ENCODE measurements at regions of chr4 and their contacts with region 1.

Region 1: DNA sequence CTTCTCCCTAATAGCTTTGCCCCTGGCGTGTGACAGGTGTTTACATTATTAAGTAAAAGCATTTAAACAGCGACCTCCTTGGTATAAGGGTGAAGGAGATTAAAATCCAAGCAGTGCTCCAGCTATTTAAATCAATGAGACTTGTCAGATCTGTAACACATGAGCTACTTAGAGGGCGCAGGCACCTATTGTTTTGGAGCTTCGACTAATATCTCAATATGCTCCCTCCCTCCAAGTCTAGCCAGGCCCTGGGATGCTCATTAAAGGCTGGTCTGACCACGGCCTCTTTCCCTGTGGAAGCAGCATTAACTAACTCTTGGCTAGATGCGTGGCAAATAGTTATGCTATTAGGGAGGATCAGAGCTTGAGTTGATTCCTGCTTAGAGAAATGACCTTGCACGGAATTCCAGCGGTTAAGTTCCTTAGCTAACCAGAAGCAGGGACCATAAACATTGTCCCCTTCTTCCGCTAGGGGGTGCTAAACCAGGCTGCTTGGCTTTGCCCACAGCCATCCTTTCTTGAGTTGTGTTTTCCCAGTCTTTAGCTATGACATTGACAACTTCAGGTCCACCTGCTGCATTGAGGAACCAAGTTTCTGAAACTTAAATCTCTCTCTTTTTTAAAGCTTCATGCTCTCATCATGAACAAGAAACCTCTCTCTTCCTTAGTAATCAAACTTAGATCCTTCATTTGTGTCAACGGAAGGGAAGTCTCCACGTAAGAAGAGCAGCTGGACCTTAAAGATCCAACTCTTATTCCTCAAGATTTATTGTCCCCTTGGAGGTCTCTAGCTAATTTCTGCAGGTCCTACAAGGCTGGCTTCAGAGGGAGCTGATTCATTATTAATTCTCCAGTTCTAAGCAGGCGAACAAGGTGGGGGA is 80.7 kb upstream of the IGFBP7 start:
- DNase-seq: peak; percentile 57 to 88
- H3K4me3 ChIP-seq: peak overlapping the region in 1 of 4 experiments; percentile 10; a peak in 1 of 8 replicates
- H3K27ac ChIP-seq: no peak overlapping the region
- H3K4me1 ChIP-seq: peaks cover 12 to 42% (median 22%) of the 10 kb centered on the region in 4 experiments
- H3K27me3 ChIP-seq: peaks cover 2 to 20% (median 11%) of the 10 kb centered on the region in 4 experiments; a peak in 6 of 7 replicates
- CTCF ChIP-seq: peak; percentile 66 to 96 (median 79)
- EP300 ChIP-seq: no peak
- POLR2A ChIP-seq: no peak
- RAD21 ChIP-seq: peak; percentile 58 to 68

Region 2: DNA sequence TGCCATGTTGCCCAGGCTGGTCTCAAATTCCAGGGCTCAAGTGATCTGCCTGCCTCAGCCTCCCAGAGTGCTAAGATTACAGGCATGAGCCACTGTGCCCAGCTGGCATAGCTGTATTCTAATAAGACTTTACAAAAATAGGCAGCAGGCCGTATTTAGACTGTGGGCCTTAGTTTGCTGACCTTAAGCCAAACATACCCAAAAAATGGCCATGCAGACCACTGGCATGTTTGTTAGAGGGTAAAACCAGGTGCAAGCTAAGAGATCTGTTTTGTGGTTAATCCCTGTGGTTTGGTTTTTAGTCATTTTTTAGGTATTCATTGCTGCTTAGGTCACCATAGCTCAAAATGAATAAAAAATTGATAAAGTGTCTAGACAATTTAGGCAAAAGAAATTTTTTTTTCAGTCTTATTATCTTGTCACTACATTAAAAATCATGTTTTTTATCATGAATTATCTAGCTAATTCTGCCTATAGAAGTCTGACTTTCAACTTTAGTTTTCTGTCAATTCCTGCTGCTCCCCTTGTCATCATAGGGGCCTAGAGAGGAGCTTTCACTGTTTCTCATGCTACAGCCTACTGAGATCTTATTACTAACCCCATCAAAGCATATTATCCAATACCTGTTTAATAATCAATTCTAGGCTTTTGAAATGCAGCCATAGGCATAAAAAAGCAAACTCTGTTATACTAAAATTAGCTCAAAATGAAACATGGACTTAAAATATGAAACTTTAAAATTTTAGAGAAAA is 361.9 kb before region 1 on chr4:
- CTCF ChIA-PET with region 1: no interaction called
- POLR2A ChIA-PET with region 1: no interaction called
- DNase-seq: no peak
- H3K4me3 ChIP-seq: no peak overlapping the region
- H3K27ac ChIP-seq: no peak overlapping the region
- H3K4me1 ChIP-seq: no peaks in the 10 kb centered on the region
- H3K27me3 ChIP-seq: no peaks in the 10 kb centered on the region
- CTCF ChIP-seq: no peak
- EP300 ChIP-seq: no peak
- POLR2A ChIP-seq: no peak
- RAD21 ChIP-seq: no peak

Region 3: DNA sequence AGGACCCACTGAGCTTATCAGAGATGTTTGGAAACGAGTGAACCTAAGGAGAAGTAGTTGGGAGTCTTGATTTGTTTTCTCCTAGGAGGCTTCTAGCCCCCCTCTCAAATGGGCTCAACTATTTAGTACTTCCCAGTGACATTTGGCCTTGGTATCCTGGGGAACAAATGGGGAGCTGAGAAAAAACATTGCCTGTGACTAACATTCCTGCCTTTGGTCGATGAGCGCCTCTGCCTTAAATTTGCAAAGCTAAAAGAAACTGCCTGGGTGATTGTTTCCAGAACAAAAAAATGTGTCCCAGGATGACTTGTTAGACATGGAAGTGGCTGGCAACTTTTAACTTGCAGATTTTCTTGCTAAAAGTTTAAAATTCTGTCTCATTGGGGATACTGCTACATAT is 21.9 kb before region 1 on chr4:
- CTCF ChIA-PET with region 1: interaction called, 91 read pairs
- POLR2A ChIA-PET with region 1: interaction called, 3 read pairs
- DNase-seq: no peak
- H3K4me3 ChIP-seq: no peak overlapping the region
- H3K27ac ChIP-seq: no peak overlapping the region
- H3K4me1 ChIP-seq: peaks cover 0 to 3% (median 1%) of the 10 kb centered on the region in 4 experiments; a peak in 3 of 7 replicates
- H3K27me3 ChIP-seq: peaks cover 0 to 10% (median 9%) of the 10 kb centered on the region in 4 experiments; a peak in 4 of 7 replicates
- CTCF ChIP-seq: no peak
- EP300 ChIP-seq: no peak
- POLR2A ChIP-seq: no peak
- RAD21 ChIP-seq: no peak

Region 4: GRCh38 chr4:57206172-57206571 is 15.3 kb after region 1 on chr4:
- CTCF ChIA-PET with region 1: interaction called, 21 read pairs
- POLR2A ChIA-PET with region 1: interaction called, 3 read pairs
- DNase-seq: no peak
- H3K4me3 ChIP-seq: no peak overlapping the region
- H3K27ac ChIP-seq: no peak overlapping the region
- H3K4me1 ChIP-seq: peaks cover 0 to 4% (median 2%) of the 10 kb centered on the region in 4 experiments; a peak in 3 of 7 replicates
- H3K27me3 ChIP-seq: no peaks in the 10 kb centered on the region
- CTCF ChIP-seq: no peak
- EP300 ChIP-seq: no peak
- POLR2A ChIP-seq: no peak
- RAD21 ChIP-seq: no peak

Region 5: DNA sequence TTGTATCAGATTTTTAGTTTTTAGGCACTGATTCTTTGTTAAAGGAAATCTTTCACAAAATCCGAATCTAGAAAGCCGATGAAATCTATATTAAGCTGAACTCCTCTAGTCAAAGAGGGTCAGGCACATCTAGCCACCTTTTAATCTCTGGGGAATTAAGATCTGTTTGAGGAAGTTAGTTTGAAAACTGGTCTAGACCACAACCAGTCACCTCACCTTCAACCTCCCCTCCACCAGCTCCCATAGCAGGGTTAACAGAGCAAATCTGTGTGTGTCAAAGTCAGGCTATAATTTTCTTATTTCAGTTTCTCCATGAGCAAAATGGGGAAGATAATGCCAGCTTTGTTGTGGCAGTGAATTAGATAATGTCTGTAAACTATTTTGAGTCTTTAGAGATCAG is 29.3 kb after region 1 on chr4:
- CTCF ChIA-PET with region 1: interaction called, 38 read pairs
- POLR2A ChIA-PET with region 1: no interaction called
- DNase-seq: no peak
- H3K4me3 ChIP-seq: no peak overlapping the region
- H3K27ac ChIP-seq: no peak overlapping the region
- H3K4me1 ChIP-seq: peaks cover 0 to 4% (median 1%) of the 10 kb centered on the region in 4 experiments; a peak in 1 of 7 replicates
- H3K27me3 ChIP-seq: no peaks in the 10 kb centered on the region
- CTCF ChIP-seq: no peak
- EP300 ChIP-seq: no peak
- POLR2A ChIP-seq: no peak
- RAD21 ChIP-seq: no peak

Region 6: DNA sequence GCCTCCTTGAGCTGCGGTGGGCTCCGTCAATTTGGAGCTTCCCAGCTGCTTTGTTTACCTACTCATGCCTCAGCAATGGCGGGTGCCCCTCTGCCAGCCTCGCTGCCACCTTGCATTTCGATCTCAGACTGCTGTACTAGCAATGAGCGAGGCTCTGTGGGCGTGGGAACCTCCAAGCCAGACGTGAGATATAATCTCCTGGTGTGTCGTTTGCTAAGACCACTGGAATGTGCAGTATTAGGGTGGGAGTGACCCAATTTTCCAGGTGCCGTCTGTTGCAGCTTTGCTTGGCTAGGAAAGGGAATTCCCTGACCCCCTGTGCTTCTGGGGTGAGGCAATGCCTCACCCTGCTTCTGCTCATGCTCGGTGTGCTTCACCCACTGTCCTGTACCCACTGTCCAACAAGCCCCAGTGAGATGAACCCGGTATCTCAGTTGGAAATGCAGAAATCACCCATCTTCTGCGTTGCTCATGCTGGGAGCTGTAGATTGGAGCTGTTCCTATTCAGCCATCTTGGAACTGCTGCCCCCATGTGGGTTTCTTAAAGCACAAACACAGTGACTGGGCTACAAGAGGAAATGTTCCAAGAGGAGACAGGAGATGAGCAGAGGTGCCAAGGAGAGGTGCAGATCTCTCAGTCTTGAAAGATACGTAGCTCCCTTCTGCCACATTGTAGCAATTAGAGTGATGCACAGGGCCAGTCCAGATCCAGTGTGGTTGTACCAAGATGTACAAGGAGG is 112.3 kb after region 1 on chr4:
- CTCF ChIA-PET with region 1: interaction called, 10 read pairs
- POLR2A ChIA-PET with region 1: no interaction called
- DNase-seq: no peak
- H3K4me3 ChIP-seq: no peak overlapping the region
- H3K27ac ChIP-seq: no peak overlapping the region
- H3K4me1 ChIP-seq: no peaks in the 10 kb centered on the region
- H3K27me3 ChIP-seq: no peaks in the 10 kb centered on the region
- CTCF ChIP-seq: peak in 2 of 3 experiments; percentile 7 to 18; a peak in 1 of 4 replicates
- EP300 ChIP-seq: no peak
- POLR2A ChIP-seq: no peak
- RAD21 ChIP-seq: peak; percentile 20 to 41; a peak in 3 of 4 replicates

Region 7: GRCh38 chr4:57426779-57427395 is 236.0 kb after region 1 on chr4:
- CTCF ChIA-PET with region 1: interaction called, 10 read pairs
- POLR2A ChIA-PET with region 1: no interaction called
- DNase-seq: peak; percentile 66 to 81
- H3K4me3 ChIP-seq: no peak overlapping the region
- H3K27ac ChIP-seq: no peak overlapping the region
- H3K4me1 ChIP-seq: no peaks in the 10 kb centered on the region
- H3K27me3 ChIP-seq: no peaks in the 10 kb centered on the region
- CTCF ChIP-seq: peak; percentile 71 to 92 (median 88)
- EP300 ChIP-seq: no peak
- POLR2A ChIP-seq: no peak
- RAD21 ChIP-seq: peak; percentile 94 to 95